ENCODE measurements at regions of chr19 and their contacts with region 1.

Region 1: DNA sequence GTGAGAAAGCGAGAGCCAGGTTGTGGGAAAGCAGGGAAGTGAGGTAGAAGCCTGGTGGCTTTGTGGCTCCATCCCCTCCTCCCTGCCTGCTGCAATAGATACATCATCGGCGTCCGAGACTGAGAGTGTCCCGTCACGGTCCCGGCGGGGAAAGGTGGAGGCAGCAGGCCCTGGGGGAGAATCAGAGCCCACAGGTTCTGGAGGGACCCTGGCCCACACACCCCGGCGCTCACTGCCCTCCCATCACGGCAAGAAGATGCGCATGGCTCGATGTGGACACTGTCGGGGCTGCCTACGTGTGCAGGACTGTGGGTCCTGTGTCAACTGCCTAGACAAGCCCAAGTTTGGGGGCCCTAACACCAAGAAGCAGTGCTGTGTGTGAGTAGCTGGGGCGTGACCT is 5.1 kb downstream of the KMT2B start:
- DNase-seq: no peak
- ATAC-seq: no peak

Region 2: GRCh38 chr19:35468637-35469036 is 254.3 kb before region 1 on chr19:
- intact Hi-C with region 1: no loop called
- DNase-seq: no peak
- ATAC-seq: peak; percentile 62

Region 3: GRCh38 chr19:35775298-35776110 is 52.6 kb after region 1 on chr19 and contains the start of gene ARHGAP33:
- intact Hi-C with region 1: loop called (anchors 1 kb)
- DNase-seq: peak; percentile 100
- ATAC-seq: peak; percentile 98
- total RNA-seq, gene ARHGAP33: 26.8 TPM